Right cardiac atrium (tissue), 5 donors: ENCODE measurements at regions of chr3 and their contacts with region 1.

Region 1: GRCh38 chr3:39288300-39288808 is 8.5 kb upstream of the CX3CR1 start:
- DNase-seq: peak; percentile 68 to 87 (median 84)
- ATAC-seq: peak; percentile 92 to 93
- H3K4me3 ChIP-seq: no peak overlapping the region
- H3K27ac ChIP-seq: no peak overlapping the region
- H3K4me1 ChIP-seq: no peaks in the 10 kb centered on the region
- H3K27me3 ChIP-seq: no peaks in the 10 kb centered on the region

Region 2: DNA sequence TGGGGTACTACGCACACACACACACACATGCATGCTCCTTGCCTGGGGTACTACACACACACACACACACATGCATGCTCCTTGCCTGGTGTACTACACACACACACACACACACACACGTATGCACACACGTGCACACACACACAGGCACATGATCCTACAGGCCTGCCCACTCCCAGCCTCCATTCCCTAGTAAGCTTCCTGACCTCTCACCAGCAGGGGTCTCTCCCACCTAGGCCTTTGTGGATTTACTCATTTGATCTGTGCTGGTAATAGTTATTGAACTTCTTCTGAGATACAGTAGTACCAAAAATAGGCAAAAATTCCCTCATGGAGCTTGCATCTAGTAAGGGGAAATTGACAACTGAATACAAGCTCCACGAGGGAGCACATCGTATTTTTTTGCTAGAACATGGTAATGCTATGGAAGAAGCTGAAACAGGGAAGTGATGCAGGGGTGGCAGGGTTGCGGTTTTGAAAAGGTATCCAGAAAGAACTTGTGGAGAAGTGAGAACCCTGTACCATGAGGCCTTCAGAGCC is 161.8 kb before region 1 on chr3:
- intact Hi-C with region 1: loop called (anchors 2 to 5 kb)
- DNase-seq: peak in 2 of 3 donors; percentile 75 to 81
- ATAC-seq: peak; percentile 70 to 84
- H3K4me3 ChIP-seq: no peak overlapping the region
- H3K27ac ChIP-seq: no peak overlapping the region
- H3K4me1 ChIP-seq: no peaks in the 10 kb centered on the region
- H3K27me3 ChIP-seq: no peaks in the 10 kb centered on the region

Region 3: DNA sequence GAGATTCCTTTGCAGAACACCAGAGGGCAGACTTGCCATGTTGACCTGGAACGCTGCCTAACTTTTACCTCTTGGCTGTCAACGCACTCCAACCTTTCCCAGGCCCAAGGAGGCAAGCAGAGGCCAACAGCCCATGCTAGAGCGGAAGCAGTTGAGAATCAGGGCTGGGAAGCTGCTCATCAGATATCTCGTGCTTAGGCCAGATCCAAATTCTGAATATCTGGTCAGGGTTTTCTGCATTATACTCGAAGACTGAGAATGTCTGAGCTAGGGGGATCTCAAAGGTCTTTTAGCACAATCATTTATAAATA is 98.4 kb before region 1 on chr3:
- intact Hi-C with region 1: loop called in 2 of 4 experiments (anchors 5 kb)
- DNase-seq: peak; percentile 60 to 75 (median 70)
- ATAC-seq: peak; percentile 13 to 35
- H3K4me3 ChIP-seq: peak overlapping the region; percentile 69
- H3K27ac ChIP-seq: peak overlapping the region; percentile 25
- H3K4me1 ChIP-seq: peaks cover 2% of the 10 kb centered on the region
- H3K27me3 ChIP-seq: no peaks in the 10 kb centered on the region

Region 4: DNA sequence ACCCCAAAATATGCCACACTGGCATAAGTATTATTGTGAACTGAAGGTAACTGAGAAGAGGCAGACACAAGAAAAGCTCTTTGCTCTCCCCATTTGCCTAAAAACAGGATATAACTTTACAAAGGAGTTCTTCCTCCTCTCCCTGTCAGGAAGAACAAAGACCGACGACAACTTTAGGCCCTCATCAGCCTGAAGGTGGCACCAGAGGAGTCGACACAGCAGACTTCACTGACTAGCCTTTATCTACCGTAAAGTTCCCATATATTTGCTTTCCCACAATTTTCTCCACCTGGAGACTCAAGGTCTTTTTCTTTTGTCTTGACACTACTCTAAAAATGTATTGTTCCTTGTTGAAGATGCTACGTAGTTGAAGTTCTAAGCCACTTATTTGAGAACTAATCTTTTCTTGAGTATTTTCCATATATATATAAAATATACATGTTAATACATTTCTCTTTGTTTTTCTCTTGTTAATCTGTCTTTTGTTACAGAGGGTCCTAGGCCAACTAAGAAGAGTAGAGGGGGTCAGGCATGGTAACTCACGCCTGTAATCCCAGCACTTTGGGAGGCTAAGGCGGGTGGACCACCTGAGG is 79.8 kb before region 1 on chr3:
- intact Hi-C with region 1: loop called (anchors 5 kb)
- DNase-seq: peak; percentile 42 to 78 (median 63)
- ATAC-seq: peak; percentile 83 to 87
- H3K4me3 ChIP-seq: no peak overlapping the region
- H3K27ac ChIP-seq: no peak overlapping the region
- H3K4me1 ChIP-seq: no peaks in the 10 kb centered on the region
- H3K27me3 ChIP-seq: no peaks in the 10 kb centered on the region